Activated T-helper 2 cell treated with anti-CD3 and anti-CD28 coated beads, Interferon-gamma antibody, Interleukin-2, Interleukin-4, amounts not matched to agents 10 μg/mL and 5 μg/mL and 100 μg/mL, durations not matched to agents 14 hours and 24 hours and 36 hours (primary cell): ENCODE measurements at regions of chr14 and their contacts with region 1.

Region 1: GRCh38 chr14:60753264-60754119 is 18.9 kb downstream of the MNAT1 start:
- DNase-seq: peak; percentile 67
- H3K4me3 Mint-ChIP-seq: peak overlapping the region; percentile 37
- H3K27ac Mint-ChIP-seq: peak overlapping the region; percentile 87
- H3K4me1 Mint-ChIP-seq: peaks cover 57% of the 10 kb centered on the region
- H3K27me3 Mint-ChIP-seq: no peaks in the 10 kb centered on the region

Region 2: DNA sequence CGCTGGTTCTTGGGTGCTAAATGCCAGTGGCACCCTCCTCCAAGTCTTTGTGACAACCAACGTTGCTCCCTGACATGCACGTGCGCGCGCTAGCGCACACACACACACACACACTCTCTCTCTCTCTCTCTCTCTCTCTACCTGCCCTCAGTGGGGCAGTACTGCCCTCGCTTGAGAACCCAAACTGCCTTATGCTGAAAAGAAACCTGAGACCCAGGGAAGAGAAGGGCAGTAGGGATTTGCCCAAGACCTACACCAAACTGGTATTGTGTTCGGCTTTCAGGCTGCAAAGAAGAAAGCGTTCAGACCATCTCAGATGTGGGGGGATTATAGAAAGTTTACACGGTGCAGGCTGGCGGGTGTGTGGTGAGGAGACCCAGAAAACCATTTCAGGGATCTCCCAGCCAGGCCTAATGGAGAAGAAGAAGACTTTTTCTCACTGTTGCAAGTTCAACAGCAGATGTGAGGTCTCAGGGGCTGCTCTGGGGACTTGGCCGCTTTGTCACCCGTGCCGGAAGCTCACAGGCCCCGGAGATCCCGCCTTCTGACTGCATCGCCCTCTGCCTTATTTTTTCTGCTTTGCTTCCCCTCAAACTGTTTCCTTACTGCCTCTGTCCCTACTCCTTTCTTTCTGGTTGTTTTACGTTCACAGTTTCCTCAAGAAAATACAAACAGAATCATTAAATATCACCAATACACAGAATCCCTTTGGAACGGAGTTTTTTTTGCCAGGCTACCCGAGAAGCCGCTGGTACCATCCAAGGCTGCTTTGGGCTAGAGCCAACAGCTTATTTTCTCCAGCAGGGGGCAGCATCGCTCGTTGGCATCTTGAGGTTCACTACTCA is 422.1 kb before region 1 on chr14:
- intact Hi-C with region 1: loop called (anchors 10 kb)
- DNase-seq: peak; percentile 61
- H3K4me3 Mint-ChIP-seq: peak overlapping the region; percentile 86
- H3K27ac Mint-ChIP-seq: peak overlapping the region; percentile 90
- H3K4me1 Mint-ChIP-seq: peaks cover 34% of the 10 kb centered on the region
- H3K27me3 Mint-ChIP-seq: peaks cover 46% of the 10 kb centered on the region

Region 3: GRCh38 chr14:60734465-60735242 is 18.8 kb before region 1 on chr14 and contains the start of gene MNAT1:
- intact Hi-C with region 1: loop called (anchors 1 kb)
- DNase-seq: peak; percentile 70
- H3K4me3 Mint-ChIP-seq: peak within 1 kb of the TSS; percentile 99
- H3K27ac Mint-ChIP-seq: peak within 1 kb of the TSS; percentile 83
- H3K4me1 Mint-ChIP-seq: peaks cover 23% of the 10 kb centered on the region
- H3K27me3 Mint-ChIP-seq: peaks cover 32% of the 10 kb centered on the region
- total RNA-seq, gene MNAT1: 56.2 and 57.5 TPM in 2 replicates

Region 4: GRCh38 chr14:60815371-60815770 is 61.9 kb after region 1 on chr14:
- intact Hi-C with region 1: no loop called
- DNase-seq: no peak
- H3K4me3 Mint-ChIP-seq: no peak overlapping the region
- H3K27ac Mint-ChIP-seq: no peak overlapping the region
- H3K4me1 Mint-ChIP-seq: peaks cover 8% of the 10 kb centered on the region
- H3K27me3 Mint-ChIP-seq: no peaks in the 10 kb centered on the region

Region 5: GRCh38 chr14:60856111-60856510 is 102.6 kb after region 1 on chr14:
- intact Hi-C with region 1: loop called (anchors 1 kb)
- DNase-seq: no peak
- H3K4me3 Mint-ChIP-seq: no peak overlapping the region
- H3K27ac Mint-ChIP-seq: no peak overlapping the region
- H3K4me1 Mint-ChIP-seq: peaks cover 16% of the 10 kb centered on the region
- H3K27me3 Mint-ChIP-seq: no peaks in the 10 kb centered on the region

Region 6: GRCh38 chr14:60980811-60981632 is 227.5 kb after region 1 on chr14 and contains the starts of genes SLC38A6 and TRMT5:
- intact Hi-C with region 1: loop called (anchors 2 kb)
- DNase-seq: peak; percentile 88
- H3K4me3 Mint-ChIP-seq: no peak within 1 kb of the TSS
- H3K27ac Mint-ChIP-seq: no peak within 1 kb of the TSS
- H3K4me1 Mint-ChIP-seq: peaks cover 28% of the 10 kb centered on the region
- H3K27me3 Mint-ChIP-seq: no peaks in the 10 kb centered on the region
- total RNA-seq, gene SLC38A6: 4.6 and 5.2 TPM in 2 replicates
- total RNA-seq, gene TRMT5: 14.1 and 15.5 TPM in 2 replicates